Activated CD8-positive, alpha-beta memory T cell treated with anti-CD3 and anti-CD28 coated beads, Interleukin-2, amount 10 ng/mL, durations not matched to agents 7 days and 5 days (primary cell): ENCODE measurements at regions of chr12 and their contacts with region 1.

Region 1: DNA sequence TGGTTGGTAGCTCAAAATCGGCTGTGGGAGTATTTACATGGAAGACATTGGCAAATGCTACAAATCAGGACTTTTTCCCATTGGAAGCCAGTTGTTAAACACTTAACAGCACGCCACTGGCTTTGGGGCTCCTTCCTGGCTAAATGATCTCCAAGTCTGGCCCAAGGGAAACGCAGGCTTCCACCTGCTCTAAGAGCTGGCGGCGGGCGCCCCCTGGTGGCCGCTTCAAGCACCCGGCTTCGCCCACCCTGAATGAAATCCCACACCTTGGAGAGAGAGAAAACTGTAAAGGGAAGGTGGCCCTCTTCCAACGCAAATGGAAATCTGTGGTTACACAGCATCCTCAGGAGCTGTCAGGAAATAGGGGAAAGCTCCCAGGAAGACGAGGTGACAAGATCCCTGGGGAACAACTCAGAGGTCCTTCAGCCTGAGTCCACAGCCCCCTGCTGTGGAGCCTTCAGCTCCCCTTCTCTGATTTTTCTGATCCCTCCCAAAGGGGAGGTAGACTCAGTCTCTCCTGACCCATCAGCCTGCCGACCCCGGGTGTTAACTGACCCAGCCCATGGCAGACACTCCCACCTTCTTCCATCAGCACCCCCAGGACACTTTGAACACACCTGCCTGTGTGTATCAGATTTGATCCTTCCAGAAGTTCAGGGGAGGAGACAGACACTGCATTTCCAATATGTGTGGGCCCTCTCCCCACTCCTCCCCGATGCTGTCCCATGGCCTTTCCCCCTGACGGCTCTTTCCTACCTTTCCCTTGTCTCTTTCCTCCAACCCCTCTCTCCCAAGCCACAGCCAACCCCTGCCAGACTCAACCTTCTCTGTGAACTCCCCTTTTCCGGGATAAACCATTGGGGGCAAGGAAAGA is 15.4 kb downstream of the SELPLG start:
- DNase-seq: peak; percentile 83
- ATAC-seq: peak; percentile 65
- H3K4me3 Mint-ChIP-seq: no peak overlapping the region
- H3K27ac Mint-ChIP-seq: peak overlapping the region; percentile 73
- H3K4me1 Mint-ChIP-seq: peaks cover 51% of the 10 kb centered on the region
- H3K27me3 Mint-ChIP-seq: no peaks in the 10 kb centered on the region

Region 2: GRCh38 chr12:108562348-108563135 is 55.8 kb before region 1 on chr12 and contains the start of gene ISCU:
- CTCF ChIA-PET with region 1: interaction called, 382 read pairs
- DNase-seq: peak; percentile 98
- ATAC-seq: peak; percentile 75
- H3K4me3 Mint-ChIP-seq: peak within 1 kb of the TSS; percentile 97
- H3K27ac Mint-ChIP-seq: peak within 1 kb of the TSS; percentile 99
- H3K4me1 Mint-ChIP-seq: peaks cover 62% of the 10 kb centered on the region
- H3K27me3 Mint-ChIP-seq: no peaks in the 10 kb centered on the region
- total RNA-seq, gene ISCU: 64.2 to 86.9 TPM

Region 3: GRCh38 chr12:108576660-108577234 is 41.6 kb before region 1 on chr12:
- CTCF ChIA-PET with region 1: interaction called, 382 read pairs
- DNase-seq: no peak
- ATAC-seq: no peak
- H3K4me3 Mint-ChIP-seq: no peak overlapping the region
- H3K27ac Mint-ChIP-seq: no peak overlapping the region
- H3K4me1 Mint-ChIP-seq: peaks cover 37% of the 10 kb centered on the region
- H3K27me3 Mint-ChIP-seq: peaks cover 3% of the 10 kb centered on the region

Region 4: DNA sequence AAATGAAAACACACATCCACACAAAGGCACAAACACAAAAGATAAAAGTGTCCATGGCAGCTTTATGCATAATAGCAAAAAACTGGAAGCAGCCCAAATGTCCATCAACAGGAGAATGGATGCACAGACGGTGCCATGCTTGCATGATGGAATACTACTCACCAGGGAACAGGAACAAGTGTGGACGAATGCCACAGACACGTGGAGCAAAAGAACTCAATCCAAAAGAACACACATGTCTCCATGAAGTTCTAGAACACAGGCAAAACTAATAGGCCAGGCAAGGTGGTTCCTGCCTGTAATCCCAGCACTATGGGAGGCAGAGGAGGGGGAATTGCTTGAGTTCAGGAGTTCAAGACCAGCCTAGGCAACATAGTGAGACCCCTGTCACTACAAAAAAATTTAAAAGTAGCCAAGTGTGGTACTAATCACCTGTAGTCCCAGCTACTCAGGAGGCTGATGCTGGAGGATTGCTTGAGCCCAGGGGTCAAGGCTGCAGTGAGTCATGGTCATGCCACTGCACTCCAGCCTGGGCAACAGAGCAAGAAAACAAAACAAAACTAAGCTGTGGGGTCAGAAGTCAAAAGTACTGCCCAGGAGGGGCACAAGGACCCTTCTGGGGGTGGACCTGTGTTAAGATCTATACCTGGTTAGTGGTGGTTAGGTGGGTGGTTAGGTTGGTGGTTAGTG is 13.2 kb before region 1 on chr12:
- CTCF ChIA-PET with region 1: interaction called, 12 read pairs
- DNase-seq: no peak
- ATAC-seq: peak; percentile 10
- H3K4me3 Mint-ChIP-seq: peak overlapping the region; percentile 9
- H3K27ac Mint-ChIP-seq: peak overlapping the region; percentile 82
- H3K4me1 Mint-ChIP-seq: peaks cover 2% of the 10 kb centered on the region
- H3K27me3 Mint-ChIP-seq: peaks cover 7% of the 10 kb centered on the region

Region 5: GRCh38 chr12:108633534-108634248 is 15.4 kb after region 1 on chr12 and contains the start of gene SELPLG:
- CTCF ChIA-PET with region 1: interaction called, 166 read pairs
- DNase-seq: peak; percentile 95
- ATAC-seq: peak; percentile 53
- H3K4me3 Mint-ChIP-seq: peak within 1 kb of the TSS; percentile 100
- H3K27ac Mint-ChIP-seq: peak within 1 kb of the TSS; percentile 100
- H3K4me1 Mint-ChIP-seq: peaks cover 59% of the 10 kb centered on the region
- H3K27me3 Mint-ChIP-seq: no peaks in the 10 kb centered on the region
- total RNA-seq, gene SELPLG: 148 to 184 TPM

Region 6: GRCh38 chr12:108640802-108641445 is 22.6 kb after region 1 on chr12:
- CTCF ChIA-PET with region 1: interaction called, 166 read pairs
- DNase-seq: no peak
- ATAC-seq: no peak
- H3K4me3 Mint-ChIP-seq: no peak overlapping the region
- H3K27ac Mint-ChIP-seq: no peak overlapping the region
- H3K4me1 Mint-ChIP-seq: peaks cover 29% of the 10 kb centered on the region
- H3K27me3 Mint-ChIP-seq: no peaks in the 10 kb centered on the region